ENCODE measurements at regions of chr10 and their contacts with region 1.

Region 1: GRCh38 chr10:103476046-103476995 is 2.7 kb downstream of the CALHM3 start:
- DNase-seq: peak; percentile 73
- ATAC-seq: peak; percentile 93
- H3K4me3 Mint-ChIP-seq: no peak overlapping the region
- H3K27ac Mint-ChIP-seq: no peak overlapping the region
- H3K4me1 Mint-ChIP-seq: peaks cover 13% of the 10 kb centered on the region
- H3K27me3 Mint-ChIP-seq: no peaks in the 10 kb centered on the region
- CTCF ChIP-seq: 0 out of 2 replicates have a peak, but pooled peaks have one; percentile 27

Region 2: DNA sequence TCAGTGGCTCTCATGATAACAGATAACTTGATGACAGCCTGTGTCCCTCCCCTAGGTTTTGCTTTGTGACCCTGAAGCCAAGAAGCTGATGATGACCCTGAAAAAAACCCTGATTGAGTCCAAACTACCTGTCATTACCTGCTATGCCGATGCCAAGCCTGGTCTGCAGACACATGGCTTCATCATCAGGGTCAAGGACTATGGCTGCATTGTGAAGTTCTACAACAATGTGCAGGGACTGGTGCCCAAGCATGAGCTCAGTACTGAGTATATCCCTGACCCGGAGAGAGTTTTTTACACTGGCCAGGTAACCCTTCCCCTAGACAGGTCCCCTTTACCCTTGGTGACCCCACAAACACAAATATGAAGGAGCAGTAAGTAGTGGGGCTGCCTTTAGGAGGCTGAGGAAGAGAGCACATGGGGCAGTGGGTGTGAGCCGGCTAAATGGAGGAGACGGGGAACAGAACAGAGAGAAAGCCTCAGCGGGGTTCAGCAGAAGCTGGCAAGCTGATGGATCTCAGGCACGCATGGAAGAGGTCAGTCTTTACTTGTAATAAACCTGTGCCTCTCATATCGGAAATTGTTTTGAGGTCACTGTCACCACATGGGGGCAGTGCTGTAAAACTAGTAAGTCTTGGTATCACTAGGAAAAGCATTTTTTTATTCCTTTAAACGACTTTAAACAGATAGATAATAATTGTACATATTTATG is 59.7 kb before region 1 on chr10:
- CTCF ChIA-PET with region 1: interaction called, 12 read pairs
- POLR2A ChIA-PET with region 1: no interaction called
- DNase-seq: peak; percentile 41
- ATAC-seq: peak; percentile 53
- H3K4me3 Mint-ChIP-seq: no peak overlapping the region
- H3K27ac Mint-ChIP-seq: no peak overlapping the region
- H3K4me1 Mint-ChIP-seq: no peaks in the 10 kb centered on the region
- H3K27me3 Mint-ChIP-seq: no peaks in the 10 kb centered on the region
- CTCF ChIP-seq: no peak

Region 3: GRCh38 chr10:103451831-103452505 is 24.4 kb before region 1 on chr10 and contains the start of gene CALHM2:
- CTCF ChIA-PET with region 1: interaction called, 49 read pairs
- POLR2A ChIA-PET with region 1: interaction called, 4 read pairs
- DNase-seq: peak; percentile 60
- ATAC-seq: peak; percentile 71
- H3K4me3 Mint-ChIP-seq: peak within 1 kb of the TSS; percentile 68
- H3K27ac Mint-ChIP-seq: no peak within 1 kb of the TSS
- H3K4me1 Mint-ChIP-seq: peaks cover 7% of the 10 kb centered on the region; the same call in 1 of the 2 replicates
- H3K27me3 Mint-ChIP-seq: no peaks in the 10 kb centered on the region
- CTCF ChIP-seq: no peak
- total RNA-seq, gene CALHM2: 1.8 to 2.4 TPM (median 1.9 TPM) in 3 replicates

Region 4: DNA sequence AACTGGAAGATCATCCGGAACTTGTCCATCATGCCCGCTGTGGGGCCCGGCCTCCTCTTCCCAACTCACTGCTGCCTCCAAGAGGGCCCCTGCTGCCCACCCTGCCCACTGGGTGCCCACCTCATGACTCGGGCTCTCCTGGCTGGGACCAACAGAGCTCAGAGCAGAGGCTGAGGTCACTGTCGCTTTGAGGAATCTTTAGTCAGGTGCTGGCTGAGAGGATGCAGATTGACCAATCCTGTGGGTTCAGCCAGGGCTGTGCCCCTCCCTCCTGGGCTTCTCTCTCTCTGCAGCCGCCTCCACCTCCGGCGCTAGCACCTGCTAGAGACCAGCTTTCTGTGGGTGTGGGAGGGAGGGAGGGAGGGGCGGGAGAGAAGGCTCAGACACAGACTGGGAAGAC is 17.6 kb before region 1 on chr10 and contains the start of gene CALHM1:
- CTCF ChIA-PET with region 1: interaction called, 49 read pairs
- POLR2A ChIA-PET with region 1: no interaction called
- DNase-seq: peak; percentile 65
- ATAC-seq: peak; percentile 93
- H3K4me3 Mint-ChIP-seq: no peak within 1 kb of the TSS
- H3K27ac Mint-ChIP-seq: no peak within 1 kb of the TSS
- H3K4me1 Mint-ChIP-seq: peaks cover 3% of the 10 kb centered on the region; the same call in 1 of the 2 replicates
- H3K27me3 Mint-ChIP-seq: no peaks in the 10 kb centered on the region
- CTCF ChIP-seq: no peak
- total RNA-seq, gene CALHM1: 0.30 to 0.55 TPM (median 0.39 TPM) in 3 replicates

Region 5: DNA sequence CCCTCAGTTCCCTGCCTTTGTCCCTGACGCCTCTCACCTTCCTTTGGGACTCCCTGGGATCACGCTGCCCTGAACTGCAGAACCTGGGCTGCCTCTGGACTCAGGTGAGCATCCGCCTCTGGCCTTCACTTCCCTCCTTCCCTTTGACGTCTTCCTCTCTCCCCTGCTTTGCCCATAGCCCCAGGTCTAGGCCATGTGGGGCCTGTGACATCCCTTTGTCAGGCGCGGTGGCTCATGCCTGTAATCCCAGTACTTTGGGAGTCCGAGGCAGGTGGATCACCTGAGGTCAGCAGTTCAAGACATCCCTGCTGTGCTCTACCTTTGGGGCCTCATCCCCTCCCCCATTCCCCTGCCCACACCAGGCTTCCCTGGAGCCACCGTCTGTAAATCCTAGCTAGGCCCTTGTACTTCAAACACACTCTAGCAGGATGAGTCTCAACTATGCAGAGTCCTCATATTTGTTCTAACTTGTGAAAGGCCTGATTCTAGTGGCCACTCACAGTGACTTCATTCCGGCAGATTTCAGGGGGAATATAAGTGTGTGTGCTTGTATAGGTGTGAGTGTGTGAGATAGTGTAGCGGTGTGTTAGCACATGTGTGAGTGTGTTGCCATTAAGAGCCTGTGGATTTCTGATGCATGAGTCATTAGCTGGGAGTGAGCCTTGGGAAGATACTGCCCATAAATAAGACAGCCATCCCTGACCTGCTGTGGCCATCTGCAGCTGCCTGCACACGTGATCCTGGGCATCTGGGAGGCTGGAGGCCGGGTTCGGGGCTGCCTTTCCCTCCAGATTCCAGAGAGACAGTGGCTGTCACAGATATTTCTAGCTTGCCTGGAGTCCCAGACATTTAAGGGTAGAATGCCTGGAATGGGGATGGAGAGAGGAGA is 15.4 kb after region 1 on chr10:
- CTCF ChIA-PET with region 1: interaction called, 22 read pairs
- POLR2A ChIA-PET with region 1: interaction called, 3 read pairs
- DNase-seq: no peak
- ATAC-seq: no peak
- H3K4me3 Mint-ChIP-seq: 0 out of 2 replicates have a peak overlapping the region, but pooled peaks have one; percentile 11
- H3K27ac Mint-ChIP-seq: no peak overlapping the region
- H3K4me1 Mint-ChIP-seq: peaks cover 9% of the 10 kb centered on the region
- H3K27me3 Mint-ChIP-seq: peaks cover 49% of the 10 kb centered on the region
- CTCF ChIP-seq: no peak

Region 6: DNA sequence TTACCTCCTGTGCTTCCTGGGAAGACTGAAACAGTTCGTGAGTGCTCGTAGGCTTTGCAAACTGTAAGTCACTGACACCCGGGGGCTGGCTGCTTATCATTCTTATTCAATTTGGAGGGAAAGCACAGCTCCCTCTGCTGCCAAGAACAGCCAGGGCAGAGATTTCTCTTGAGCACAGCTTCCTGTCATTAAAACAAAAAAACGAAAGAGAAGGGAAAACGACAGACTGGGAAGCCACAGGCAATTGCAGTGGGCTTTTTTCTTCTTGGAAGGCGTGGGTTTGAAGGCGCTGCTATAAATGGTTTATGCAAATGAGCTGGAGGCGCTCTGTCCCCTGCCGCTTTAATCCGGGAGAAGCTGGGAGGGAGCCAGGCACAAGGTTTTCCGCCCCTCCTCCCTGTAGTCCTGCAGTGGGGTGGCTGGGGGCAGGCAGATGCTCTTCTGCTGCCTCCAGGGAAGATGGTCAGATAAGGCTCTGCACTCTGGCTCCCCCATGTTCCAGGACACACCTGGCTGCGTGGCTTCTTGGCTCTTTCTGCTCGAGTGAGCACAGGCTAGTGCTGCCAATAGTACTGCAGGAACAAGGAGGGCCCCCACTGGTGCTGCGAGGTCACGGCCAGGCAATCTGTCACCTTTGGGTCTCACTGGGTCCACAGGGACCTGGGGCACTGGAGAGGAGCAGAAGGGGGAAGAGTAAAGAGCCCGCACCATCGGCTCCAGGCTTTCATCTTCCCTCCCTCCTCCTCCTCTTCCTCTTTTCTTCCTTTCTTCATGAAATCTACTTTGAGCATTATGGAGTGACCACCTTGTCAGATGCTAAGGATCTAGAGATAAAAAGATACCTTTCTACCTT is 66.7 kb after region 1 on chr10:
- CTCF ChIA-PET with region 1: interaction called, 10 read pairs
- POLR2A ChIA-PET with region 1: no interaction called
- DNase-seq: peak; percentile 45
- ATAC-seq: peak; percentile 89
- H3K4me3 Mint-ChIP-seq: peak overlapping the region; percentile 59
- H3K27ac Mint-ChIP-seq: peak overlapping the region; percentile 7
- H3K4me1 Mint-ChIP-seq: peaks cover 16% of the 10 kb centered on the region
- H3K27me3 Mint-ChIP-seq: peaks cover 3% of the 10 kb centered on the region; the same call in 1 of the 2 replicates
- CTCF ChIP-seq: no peak